Panc1 (cell line): ENCODE measurements at regions of chr19 and their contacts with region 1.

Region 1: DNA sequence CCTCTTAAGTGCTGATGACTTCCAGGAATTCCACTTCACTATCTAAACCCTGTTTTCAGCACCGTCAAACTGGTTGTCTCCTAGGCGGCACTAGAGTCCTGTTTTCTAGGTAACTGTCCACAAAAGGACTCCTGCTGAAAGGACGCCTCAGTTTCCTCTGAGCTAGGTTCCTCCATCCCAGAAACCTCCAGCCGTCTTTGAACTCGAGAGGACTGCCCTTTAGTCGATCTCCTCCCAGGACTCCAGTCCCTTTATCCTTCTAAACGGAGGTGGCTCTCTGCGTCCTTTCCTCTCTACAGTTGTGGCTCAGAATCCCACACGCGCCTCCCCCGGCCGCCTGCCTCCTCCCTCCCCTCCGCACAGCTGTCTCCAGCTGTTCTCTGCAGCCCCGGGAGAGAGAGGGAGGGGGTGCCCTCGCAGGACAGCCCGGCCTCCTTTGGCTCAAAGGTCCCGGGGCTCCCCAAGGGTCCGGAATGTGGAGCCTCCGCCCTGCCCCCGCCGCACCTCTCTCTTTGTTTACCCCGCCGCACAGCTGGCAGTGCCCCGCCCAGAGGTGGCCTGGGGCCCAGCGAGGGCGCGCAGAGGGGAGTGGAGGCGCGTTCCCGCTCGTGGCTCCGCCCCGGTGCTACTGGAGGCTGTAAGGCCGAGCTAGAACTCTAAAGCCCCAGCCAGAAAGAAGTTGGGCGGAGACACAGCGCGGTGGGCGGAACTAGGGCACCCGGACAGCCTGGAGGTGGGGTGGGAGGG is 2.4 kb downstream of the LTBP4 start:
- DNase-seq: peak; percentile 84
- ATAC-seq: peak; percentile 78
- H3K4me3 ChIP-seq: peak overlapping the region; percentile 45 to 62
- H3K27ac ChIP-seq: peak overlapping the region; percentile 34; the same call in 1 of the 2 replicates
- H3K4me1 ChIP-seq: peaks cover 15% of the 10 kb centered on the region
- H3K27me3 ChIP-seq: no peaks in the 10 kb centered on the region
- CTCF ChIP-seq: no peak

Region 2: GRCh38 chr19:40420766-40421764 is 182.5 kb before region 1 on chr19:
- CTCF ChIA-PET with region 1: no interaction called
- POLR2A ChIA-PET with region 1: interaction called, 11 read pairs
- in situ Hi-C with region 1: no loop called
- intact Hi-C with region 1: no loop called
- DNase-seq: no peak
- ATAC-seq: peak; percentile 83
- H3K4me3 ChIP-seq: peak overlapping the region; percentile 53 to 64
- H3K27ac ChIP-seq: peak overlapping the region; percentile 92
- H3K4me1 ChIP-seq: peaks cover 36% of the 10 kb centered on the region
- H3K27me3 ChIP-seq: no peaks in the 10 kb centered on the region
- CTCF ChIP-seq: peak; percentile 95

Region 3: DNA sequence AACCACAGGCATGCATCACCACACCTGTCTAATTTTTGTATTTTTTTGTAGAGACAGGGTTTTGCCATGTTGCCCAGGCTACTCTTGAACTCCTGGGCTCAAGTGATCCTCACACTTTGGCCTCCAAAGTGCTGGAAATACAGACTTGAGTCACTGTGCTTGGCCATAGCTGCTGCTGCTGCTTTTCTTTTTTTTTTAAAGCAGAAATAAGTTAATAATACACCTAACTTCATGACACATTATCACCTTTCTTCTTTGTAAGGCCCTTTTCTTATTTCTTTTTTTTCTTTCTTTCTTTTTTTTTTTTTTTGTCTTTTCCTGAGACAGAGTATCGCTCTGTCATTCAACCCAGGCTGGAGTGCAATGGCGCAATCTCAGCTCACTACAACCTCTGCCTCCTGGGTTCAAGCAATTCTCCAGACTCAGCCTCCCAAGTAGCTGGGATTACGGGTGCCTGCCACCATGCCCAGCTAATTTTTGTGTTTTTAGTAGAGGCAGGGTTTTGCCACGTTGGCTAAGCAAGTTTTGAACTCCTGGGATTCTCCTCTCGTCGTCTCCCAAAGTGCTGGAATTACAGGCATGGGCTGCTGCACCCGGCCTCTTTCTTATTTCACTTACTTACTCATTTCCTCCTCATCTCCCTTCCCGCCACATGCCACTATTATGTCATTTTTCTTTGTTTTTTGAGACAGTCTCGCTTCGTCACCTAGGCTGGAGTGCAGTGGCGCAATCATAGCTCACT is 18.1 kb before region 1 on chr19:
- CTCF ChIA-PET with region 1: interaction called, 12 read pairs
- POLR2A ChIA-PET with region 1: no interaction called
- in situ Hi-C with region 1: no loop called
- intact Hi-C with region 1: no loop called
- DNase-seq: no peak
- ATAC-seq: peak; percentile 43; the same call in 1 of the 2 replicates
- H3K4me3 ChIP-seq: no peak overlapping the region
- H3K27ac ChIP-seq: no peak overlapping the region
- H3K4me1 ChIP-seq: no peaks in the 10 kb centered on the region
- H3K27me3 ChIP-seq: no peaks in the 10 kb centered on the region
- CTCF ChIP-seq: no peak

Region 4: GRCh38 chr19:40623403-40624251 is 20.1 kb after region 1 on chr19:
- CTCF ChIA-PET with region 1: no interaction called
- POLR2A ChIA-PET with region 1: no interaction called
- in situ Hi-C with region 1: no loop called
- intact Hi-C with region 1: no loop called
- DNase-seq: no peak
- ATAC-seq: peak; percentile 95
- H3K4me3 ChIP-seq: no peak overlapping the region
- H3K27ac ChIP-seq: no peak overlapping the region
- H3K4me1 ChIP-seq: no peaks in the 10 kb centered on the region
- H3K27me3 ChIP-seq: no peaks in the 10 kb centered on the region
- CTCF ChIP-seq: no peak